H1 (cell line): ENCODE measurements at regions of chr10 and their contacts with region 1.

Region 1: DNA sequence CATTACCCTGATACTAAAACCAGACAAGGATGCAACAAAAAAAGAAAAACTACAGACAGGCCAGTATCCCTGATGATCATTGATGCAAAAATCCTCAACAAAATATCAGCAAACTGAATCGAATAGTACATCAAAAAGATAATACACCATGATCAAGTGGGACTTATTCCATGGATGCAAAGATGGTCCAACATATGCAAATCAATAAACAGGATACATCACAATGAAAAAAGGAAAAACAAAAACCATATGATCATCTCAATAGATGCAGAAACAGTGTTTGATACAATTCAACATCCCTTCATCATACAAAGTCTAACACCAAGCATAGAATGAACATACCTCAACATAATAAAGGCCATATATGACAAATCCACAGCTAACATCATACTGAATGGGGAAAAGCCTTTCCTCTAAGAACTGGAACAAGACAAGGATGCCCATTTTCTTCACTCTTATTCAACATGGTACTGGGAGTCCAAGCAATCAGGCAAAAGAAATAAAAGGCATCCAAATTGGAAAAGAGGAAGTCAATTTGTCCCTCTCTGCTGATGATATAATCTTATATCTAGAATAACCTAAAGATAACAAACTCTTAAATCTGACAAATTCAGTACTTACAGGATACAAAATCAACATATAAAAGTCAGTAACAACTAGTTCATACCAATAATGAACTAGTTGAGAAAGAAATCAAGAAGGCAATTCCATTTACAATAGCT is 48.8 kb upstream of the ASAH2 start:
- DNase-seq: no peak
- H3K4me3 ChIP-seq: no peak overlapping the region
- H3K27ac ChIP-seq: no peak overlapping the region
- H3K4me1 ChIP-seq: no peaks in the 10 kb centered on the region
- H3K27me3 ChIP-seq: no peaks in the 10 kb centered on the region
- CTCF ChIP-seq: no peak
- EP300 ChIP-seq: no peak
- POLR2A ChIP-seq: no peak
- RAD21 ChIP-seq: no peak

Region 2: GRCh38 chr10:50310560-50311174 is 10.6 kb after region 1 on chr10:
- CTCF ChIA-PET with region 1: interaction called, 16 read pairs
- POLR2A ChIA-PET with region 1: no interaction called
- DNase-seq: peak in 1 of 2 experiments; percentile 77
- H3K4me3 ChIP-seq: no peak overlapping the region
- H3K27ac ChIP-seq: no peak overlapping the region
- H3K4me1 ChIP-seq: no peaks in the 10 kb centered on the region
- H3K27me3 ChIP-seq: no peaks in the 10 kb centered on the region
- CTCF ChIP-seq: peak; percentile 52 to 92 (median 74)
- EP300 ChIP-seq: no peak
- POLR2A ChIP-seq: no peak
- RAD21 ChIP-seq: peak; percentile 50 to 73